ENCODE measurements at regions of chr6 and their contacts with region 1.

Region 1: GRCh38 chr6:33430991-33431879 is 11.4 kb downstream of the SYNGAP1 start:
- DNase-seq: peak; percentile 82 to 91 (median 84)
- H3K4me3 ChIP-seq: peak overlapping the region; percentile 11 to 54
- H3K4me3 Mint-ChIP-seq: peak overlapping the region; percentile 71 to 94 (median 90)
- H3K27ac ChIP-seq: peak overlapping the region; percentile 76
- H3K27ac Mint-ChIP-seq: peak overlapping the region; percentile 94 to 99 (median 98)
- H3K4me1 ChIP-seq: peaks cover 53% of the 10 kb centered on the region
- H3K4me1 Mint-ChIP-seq: peaks cover 48 to 66% (median 60%) of the 10 kb centered on the region in 4 donors
- H3K27me3 ChIP-seq: no peaks in the 10 kb centered on the region
- H3K27me3 Mint-ChIP-seq: no peaks in the 10 kb centered on the region

Region 2: DNA sequence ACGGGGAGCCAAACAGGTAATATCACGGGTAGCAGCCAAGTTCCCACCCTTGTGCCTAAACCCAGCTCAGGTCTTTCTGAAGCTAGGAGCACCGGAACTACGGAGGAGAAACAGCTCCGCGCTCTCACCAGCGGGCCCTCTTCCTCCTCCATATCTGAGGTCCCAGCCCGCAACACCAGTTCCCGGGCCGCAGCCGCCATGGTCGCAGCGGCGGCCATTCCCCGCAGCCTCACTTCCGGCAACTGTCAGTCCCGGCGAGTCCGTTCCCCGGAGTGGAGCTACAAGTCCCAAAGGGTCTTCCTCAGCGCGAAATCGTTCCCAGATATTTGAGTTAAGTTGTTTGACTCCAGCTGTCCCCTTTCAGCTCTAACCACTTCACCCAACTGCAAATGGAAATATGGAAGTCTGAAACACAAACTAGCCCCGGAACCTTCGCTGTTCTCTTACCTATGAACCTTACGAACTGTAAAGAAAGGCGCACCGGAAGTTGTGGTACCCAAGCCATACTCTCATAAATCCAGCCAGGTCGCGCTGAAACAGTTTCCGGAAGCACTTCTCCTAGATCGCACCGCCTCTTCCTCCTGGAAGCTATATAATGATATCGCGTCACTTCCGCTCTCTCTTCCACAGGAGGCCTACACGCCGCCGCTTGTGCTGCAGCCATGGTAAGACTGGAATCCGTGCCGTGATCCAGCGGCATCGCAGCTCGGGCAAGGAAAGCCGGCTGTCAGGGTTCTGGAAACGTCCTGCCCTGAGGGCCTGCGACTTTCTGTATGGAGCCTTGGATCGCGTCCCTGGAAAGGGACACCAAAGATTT is 159.6 kb before region 1 on chr6 and contains the starts of genes RPS18 and VPS52:
- CTCF ChIA-PET with region 1: interaction called, 4 read pairs
- POLR2A ChIA-PET with region 1: interaction called, 24 read pairs
- intact Hi-C with region 1: no loop called
- DNase-seq: peak; percentile 95 to 98 (median 96)
- H3K4me3 ChIP-seq: peak within 1 kb of the TSS; percentile 75 to 90
- H3K4me3 Mint-ChIP-seq: peak within 1 kb of the TSS; percentile 96 to 100 (median 98)
- H3K27ac ChIP-seq: peak within 1 kb of the TSS; percentile 85
- H3K27ac Mint-ChIP-seq: peak within 1 kb of the TSS; percentile 97 to 100 (median 99)
- H3K4me1 ChIP-seq: peaks cover 62% of the 10 kb centered on the region
- H3K4me1 Mint-ChIP-seq: peaks cover 43 to 78% (median 61%) of the 10 kb centered on the region in 4 donors
- H3K27me3 ChIP-seq: no peaks in the 10 kb centered on the region
- H3K27me3 Mint-ChIP-seq: no peaks in the 10 kb centered on the region
- total RNA-seq, gene RPS18: 3,264 to 3,439 TPM
- total RNA-seq, gene VPS52: 89.4 to 95.7 TPM

Region 3: GRCh38 chr6:33288921-33289748 is 142.1 kb before region 1 on chr6 and contains the starts of genes PFDN6 and WDR46:
- CTCF ChIA-PET with region 1: no interaction called
- POLR2A ChIA-PET with region 1: interaction called, 17 read pairs
- intact Hi-C with region 1: no loop called
- DNase-seq: peak; percentile 87 to 92 (median 89)
- H3K4me3 ChIP-seq: peak within 1 kb of the TSS; percentile 73 to 84
- H3K4me3 Mint-ChIP-seq: peak within 1 kb of the TSS; percentile 96 to 100 (median 98)
- H3K27ac ChIP-seq: peak within 1 kb of the TSS; percentile 71
- H3K27ac Mint-ChIP-seq: peak within 1 kb of the TSS; percentile 79 to 98 (median 95)
- H3K4me1 ChIP-seq: peaks cover 30% of the 10 kb centered on the region
- H3K4me1 Mint-ChIP-seq: peaks cover 24 to 48% (median 36%) of the 10 kb centered on the region in 4 donors
- H3K27me3 ChIP-seq: no peaks in the 10 kb centered on the region
- H3K27me3 Mint-ChIP-seq: no peaks in the 10 kb centered on the region
- total RNA-seq, gene PFDN6: 43.6 to 45.5 TPM
- total RNA-seq, gene WDR46: 60.8 to 66.1 TPM

Region 4: DNA sequence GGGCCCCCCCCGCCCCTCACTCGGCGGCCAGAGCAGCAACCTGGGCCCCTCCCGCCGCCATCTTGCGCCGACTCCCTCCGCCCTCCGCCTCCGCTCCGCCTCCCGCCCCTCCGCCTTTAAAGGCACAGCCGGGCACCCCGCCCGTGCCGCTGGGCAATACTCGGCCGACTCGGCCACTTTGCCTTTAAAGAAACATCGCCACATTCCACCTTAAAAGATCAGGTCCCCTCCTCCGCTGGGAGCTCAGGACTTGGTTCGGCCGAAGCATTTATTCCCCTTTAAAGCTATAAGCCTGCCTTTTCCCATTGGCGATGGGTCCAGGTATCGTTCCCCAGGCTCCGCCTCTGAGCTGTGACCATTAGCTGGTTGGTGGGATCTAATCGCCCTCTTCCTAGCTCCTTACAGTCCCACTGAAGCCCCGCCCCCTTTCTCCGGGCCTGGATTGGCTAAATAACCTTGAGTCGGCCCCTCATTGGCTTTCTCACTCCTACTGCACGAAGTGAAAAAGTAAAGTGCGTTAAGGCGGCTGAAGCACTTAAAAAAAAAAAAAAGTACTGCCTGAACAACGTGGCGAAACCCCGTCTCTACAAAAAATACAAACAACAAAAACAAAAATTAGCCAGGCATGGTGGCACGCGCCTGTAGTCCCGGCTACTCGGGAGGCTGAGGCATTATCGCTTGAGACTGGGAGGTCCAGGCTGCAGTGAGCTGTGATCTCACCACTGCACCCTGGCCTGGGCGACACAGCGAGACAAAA is 113.4 kb before region 1 on chr6 and contains the start of gene ZBTB22:
- CTCF ChIA-PET with region 1: no interaction called
- POLR2A ChIA-PET with region 1: interaction called, 19 read pairs
- intact Hi-C with region 1: no loop called
- DNase-seq: peak; percentile 96 to 99 (median 97)
- H3K4me3 ChIP-seq: peak within 1 kb of the TSS; percentile 73 to 100
- H3K4me3 Mint-ChIP-seq: peak within 1 kb of the TSS; percentile 98 to 100 (median 99)
- H3K27ac ChIP-seq: peak within 1 kb of the TSS; percentile 83
- H3K27ac Mint-ChIP-seq: peak within 1 kb of the TSS; percentile 98 to 99 (median 98)
- H3K4me1 ChIP-seq: peaks cover 73% of the 10 kb centered on the region
- H3K4me1 Mint-ChIP-seq: peaks cover 40 to 100% (median 62%) of the 10 kb centered on the region in 4 donors
- H3K27me3 ChIP-seq: no peaks in the 10 kb centered on the region
- H3K27me3 Mint-ChIP-seq: no peaks in the 10 kb centered on the region
- total RNA-seq, gene ZBTB22: 28.6 to 28.7 TPM

Region 5: GRCh38 chr6:33410050-33410710 is 21.1 kb before region 1 on chr6:
- CTCF ChIA-PET with region 1: interaction called, 8 read pairs
- POLR2A ChIA-PET with region 1: interaction called, 64 read pairs
- intact Hi-C with region 1: no loop called
- DNase-seq: peak; percentile 97 to 98 (median 97)
- H3K4me3 ChIP-seq: peak overlapping the region; percentile 67 to 92
- H3K4me3 Mint-ChIP-seq: peak overlapping the region; percentile 85 to 95 (median 92)
- H3K27ac ChIP-seq: peak overlapping the region; percentile 99
- H3K27ac Mint-ChIP-seq: peak overlapping the region; percentile 94 to 100 (median 99)
- H3K4me1 ChIP-seq: peaks cover 57% of the 10 kb centered on the region
- H3K4me1 Mint-ChIP-seq: peaks cover 31 to 68% (median 48%) of the 10 kb centered on the region in 4 donors
- H3K27me3 ChIP-seq: no peaks in the 10 kb centered on the region
- H3K27me3 Mint-ChIP-seq: no peaks in the 10 kb centered on the region

Region 6: GRCh38 chr6:33454009-33454946 is 23.0 kb after region 1 on chr6 and contains the start of gene ZBTB9:
- CTCF ChIA-PET with region 1: interaction called, 3 read pairs
- POLR2A ChIA-PET with region 1: interaction called, 65 read pairs
- intact Hi-C with region 1: loop called (anchors 1 kb)
- DNase-seq: peak; percentile 92 to 96 (median 92)
- H3K4me3 ChIP-seq: peak within 1 kb of the TSS; percentile 84 to 89
- H3K4me3 Mint-ChIP-seq: peak within 1 kb of the TSS; percentile 93 to 99 (median 97)
- H3K27ac ChIP-seq: peak within 1 kb of the TSS; percentile 78
- H3K27ac Mint-ChIP-seq: peak within 1 kb of the TSS; percentile 82 to 98 (median 95)
- H3K4me1 ChIP-seq: peaks cover 29% of the 10 kb centered on the region
- H3K4me1 Mint-ChIP-seq: peaks cover 14 to 43% (median 29%) of the 10 kb centered on the region in 4 donors
- H3K27me3 ChIP-seq: no peaks in the 10 kb centered on the region
- H3K27me3 Mint-ChIP-seq: no peaks in the 10 kb centered on the region
- total RNA-seq, gene ZBTB9: 12.1 to 12.8 TPM

Region 7: DNA sequence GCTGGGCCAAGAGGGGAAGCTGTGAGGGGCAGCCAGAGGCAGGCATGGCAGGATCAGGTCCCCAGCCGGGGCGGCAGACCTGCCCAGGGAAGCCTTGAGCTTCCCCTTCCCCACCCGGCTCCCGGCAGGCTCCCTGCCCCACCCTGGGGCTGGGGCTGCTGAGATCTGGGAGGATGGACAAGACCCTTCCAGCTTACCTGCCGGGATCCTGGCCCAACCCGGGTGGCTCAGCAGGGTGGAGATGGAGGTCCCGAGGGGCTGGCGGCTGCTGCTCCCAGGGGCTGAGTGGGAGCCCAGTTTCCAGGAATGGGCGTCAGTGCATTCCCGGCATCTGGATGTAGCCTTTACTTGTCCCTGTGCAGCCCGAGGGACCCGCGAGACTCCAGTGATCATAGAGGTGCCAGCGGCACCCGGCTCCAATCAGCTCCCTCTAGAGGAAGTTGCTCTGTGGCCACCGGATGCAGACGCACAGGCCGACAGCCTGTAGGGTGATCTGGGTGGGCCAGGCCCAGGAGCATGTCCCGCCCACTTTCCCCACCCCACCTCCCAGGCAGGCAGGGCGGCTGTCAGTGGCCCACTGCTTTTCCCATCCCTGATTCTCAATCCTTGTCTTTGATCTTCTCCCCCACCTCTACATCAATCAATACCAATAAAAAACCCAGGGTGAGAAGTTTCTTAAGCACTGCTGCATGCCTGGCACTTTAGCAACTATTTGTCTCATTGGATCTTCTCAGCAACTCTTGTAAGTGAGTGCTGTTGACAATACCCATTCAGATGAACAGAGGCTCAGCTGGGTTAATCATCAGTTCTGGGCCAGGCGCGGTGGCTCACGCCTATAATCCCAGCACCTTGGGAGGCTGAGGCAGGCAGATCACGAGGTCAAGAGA is 148.8 kb after region 1 on chr6 and contains the start of gene BAK1:
- CTCF ChIA-PET with region 1: interaction called, 4 read pairs
- POLR2A ChIA-PET with region 1: interaction called, 20 read pairs
- intact Hi-C with region 1: no loop called
- DNase-seq: peak; percentile 78 to 89 (median 79)
- H3K4me3 ChIP-seq: peak within 1 kb of the TSS; percentile 88 to 98
- H3K4me3 Mint-ChIP-seq: peak within 1 kb of the TSS; percentile 93 to 100 (median 98)
- H3K27ac ChIP-seq: peak within 1 kb of the TSS; percentile 90
- H3K27ac Mint-ChIP-seq: peak within 1 kb of the TSS; percentile 98 to 100 (median 99)
- H3K4me1 ChIP-seq: peaks cover 31% of the 10 kb centered on the region
- H3K4me1 Mint-ChIP-seq: peaks cover 14 to 58% (median 32%) of the 10 kb centered on the region in 4 donors
- H3K27me3 ChIP-seq: no peaks in the 10 kb centered on the region
- H3K27me3 Mint-ChIP-seq: no peaks in the 10 kb centered on the region
- total RNA-seq, gene BAK1: 26.2 to 27.2 TPM

Measured in CD4-positive, alpha-beta memory T cell (primary cell).